Ovary (tissue), 10 donors: ENCODE measurements at regions of chr6 and their contacts with region 1.

Region 1: GRCh38 chr6:133631421-133631820 is 257.5 kb upstream of the TCF21 start:
- DNase-seq: no peak
- H3K4me3 ChIP-seq: no peak overlapping the region
- H3K27ac ChIP-seq: no peak overlapping the region
- H3K4me1 ChIP-seq: peaks cover 3% of the 10 kb centered on the region
- H3K27me3 ChIP-seq: no peaks in the 10 kb centered on the region
- CTCF ChIP-seq: no peak
- EP300 ChIP-seq: no peak
- POLR2A ChIP-seq: no peak

Region 2: GRCh38 chr6:132713352-132714134 is 917.9 kb before region 1 on chr6 and contains the start of gene VNN1:
- intact Hi-C with region 1: no loop called
- DNase-seq: no peak
- H3K4me3 ChIP-seq: no peak within 1 kb of the TSS
- H3K27ac ChIP-seq: no peak within 1 kb of the TSS
- H3K4me1 ChIP-seq: no peaks in the 10 kb centered on the region
- H3K27me3 ChIP-seq: no peaks in the 10 kb centered on the region
- CTCF ChIP-seq: no peak
- EP300 ChIP-seq: no peak
- POLR2A ChIP-seq: no peak
- total RNA-seq, gene VNN1: 0.28 to 5.0 (median 1.3) TPM in 6 of 7 donors, not detected in the other

Region 3: DNA sequence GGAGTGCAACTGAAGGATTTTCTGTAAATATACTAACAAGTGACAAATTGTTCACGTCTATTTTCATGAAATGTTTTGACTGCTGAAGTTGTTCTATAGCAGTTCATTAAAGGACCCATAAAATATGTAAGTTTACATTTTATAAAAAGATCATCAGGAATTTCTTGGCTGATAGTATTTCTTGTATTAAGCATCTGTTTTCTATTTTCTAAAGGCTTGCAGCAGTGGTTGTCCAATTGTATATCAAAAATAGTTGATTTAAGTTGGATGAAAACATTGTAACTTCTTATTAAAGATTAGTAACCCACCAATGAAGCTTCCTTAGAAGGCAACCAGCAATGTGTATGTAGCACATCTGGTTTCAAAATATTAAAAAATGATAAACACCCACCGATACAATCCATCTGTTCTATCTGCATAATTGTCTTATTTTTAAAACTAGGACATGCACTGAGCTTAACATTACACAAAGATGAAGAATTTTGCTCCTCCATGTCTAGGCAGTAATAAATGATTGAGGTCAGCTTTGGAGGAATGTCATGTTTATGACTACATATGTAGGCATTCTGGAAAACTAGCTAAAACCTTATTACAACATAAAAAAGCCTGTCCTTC is 43.8 kb before region 1 on chr6:
- intact Hi-C with region 1: loop called in 1 of 4 experiments (anchors 10 kb)
- DNase-seq: no peak
- H3K4me3 ChIP-seq: no peak overlapping the region
- H3K27ac ChIP-seq: no peak overlapping the region
- H3K4me1 ChIP-seq: no peaks in the 10 kb centered on the region
- H3K27me3 ChIP-seq: no peaks in the 10 kb centered on the region
- CTCF ChIP-seq: no peak
- EP300 ChIP-seq: no peak
- POLR2A ChIP-seq: no peak

Region 4: GRCh38 chr6:133608620-133609019 is 22.8 kb before region 1 on chr6:
- intact Hi-C with region 1: no loop called
- DNase-seq: no peak
- H3K4me3 ChIP-seq: no peak overlapping the region
- H3K27ac ChIP-seq: no peak overlapping the region
- H3K4me1 ChIP-seq: no peaks in the 10 kb centered on the region
- H3K27me3 ChIP-seq: no peaks in the 10 kb centered on the region
- CTCF ChIP-seq: no peak
- EP300 ChIP-seq: no peak
- POLR2A ChIP-seq: no peak